ENCODE measurements at regions of chr6 and their contacts with region 1.

Region 1: DNA sequence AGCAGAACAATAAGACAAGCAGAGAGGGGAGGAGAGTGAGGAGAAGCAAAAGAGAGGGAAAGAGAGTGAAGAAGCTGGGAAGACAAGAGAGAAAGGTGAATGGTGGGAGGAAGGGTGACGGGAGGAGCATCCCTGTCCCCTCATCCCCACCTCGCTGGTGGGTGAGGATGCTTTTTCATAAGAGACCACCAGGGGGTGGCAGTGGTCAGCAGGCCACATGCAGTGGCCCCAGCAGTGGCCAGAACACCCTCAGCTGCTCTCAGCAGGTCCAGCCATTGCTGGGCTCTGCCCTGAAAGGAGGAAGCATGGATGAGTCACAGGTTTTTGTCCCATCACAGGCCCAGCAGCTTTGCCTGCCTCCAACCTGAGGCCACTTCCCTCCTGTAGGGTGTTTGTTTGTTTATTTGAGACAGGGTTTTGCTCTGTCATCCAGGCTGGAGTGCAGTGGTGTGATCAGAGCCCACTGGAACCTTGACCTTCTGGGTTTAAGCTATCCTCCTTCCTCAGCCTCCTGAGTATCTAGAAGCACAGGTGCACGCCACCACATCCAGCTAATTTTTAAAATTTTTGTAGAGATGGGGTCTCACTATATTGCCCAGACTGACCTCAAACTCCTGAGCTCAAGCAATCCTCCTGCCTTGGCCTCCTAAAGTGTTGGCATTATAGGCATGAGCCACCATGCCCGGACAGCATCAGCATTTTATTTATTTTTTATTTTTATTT is 24.0 kb downstream of the FGD2 start:
- DNase-seq: peak; percentile 85
- ATAC-seq: peak; percentile 94
- H3K4me3 ChIP-seq: no peak overlapping the region
- H3K27ac ChIP-seq: no peak overlapping the region
- H3K4me1 ChIP-seq: peaks cover 3% of the 10 kb centered on the region
- H3K27me3 ChIP-seq: no peaks in the 10 kb centered on the region
- CTCF ChIP-seq: peak; percentile 74

Region 2: DNA sequence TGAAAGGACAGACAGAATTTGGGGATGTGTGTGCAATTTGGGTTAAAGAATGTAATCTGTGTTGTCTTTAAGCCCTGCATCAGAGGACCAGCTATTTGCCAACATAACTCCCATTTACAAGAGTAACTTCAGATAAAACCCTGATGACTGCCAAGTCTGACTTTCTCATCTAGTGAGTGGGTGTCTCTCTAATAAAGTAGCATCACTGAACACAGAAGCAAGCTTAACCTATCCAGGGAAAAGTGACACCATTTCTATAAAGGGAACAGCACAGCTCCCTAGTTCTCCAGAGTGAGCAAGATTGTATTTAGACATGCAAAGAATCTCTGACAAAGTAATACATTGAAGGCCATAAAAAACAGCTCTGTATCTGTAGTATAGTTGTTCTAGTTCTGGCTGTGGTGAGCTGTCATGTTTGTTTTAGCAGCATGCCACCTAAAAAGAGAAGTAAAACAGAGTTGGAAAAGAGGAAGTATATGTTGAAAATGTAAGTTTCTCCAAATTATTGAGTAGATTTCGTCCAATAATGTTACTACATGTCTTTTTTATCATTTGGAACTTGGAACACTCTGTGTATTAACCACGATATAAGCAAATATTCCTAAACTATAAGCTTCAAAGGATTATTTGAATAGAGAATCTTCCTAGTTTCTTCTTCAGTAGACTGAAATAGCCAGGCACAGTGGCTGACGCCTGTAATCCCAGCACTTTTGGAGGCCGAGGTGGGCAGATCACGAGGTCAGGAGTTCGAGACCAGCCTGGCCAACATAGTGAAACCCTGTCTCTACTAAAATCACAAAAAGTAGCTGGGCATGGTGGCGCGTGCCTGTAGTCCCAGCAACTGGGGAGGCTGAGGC is 131.7 kb after region 1 on chr6:
- intact Hi-C with region 1: no loop called
- DNase-seq: no peak
- ATAC-seq: peak; percentile 55
- H3K4me3 ChIP-seq: no peak overlapping the region
- H3K27ac ChIP-seq: no peak overlapping the region
- H3K4me1 ChIP-seq: peaks cover 5% of the 10 kb centered on the region
- H3K27me3 ChIP-seq: no peaks in the 10 kb centered on the region
- CTCF ChIP-seq: no peak

Region 3: DNA sequence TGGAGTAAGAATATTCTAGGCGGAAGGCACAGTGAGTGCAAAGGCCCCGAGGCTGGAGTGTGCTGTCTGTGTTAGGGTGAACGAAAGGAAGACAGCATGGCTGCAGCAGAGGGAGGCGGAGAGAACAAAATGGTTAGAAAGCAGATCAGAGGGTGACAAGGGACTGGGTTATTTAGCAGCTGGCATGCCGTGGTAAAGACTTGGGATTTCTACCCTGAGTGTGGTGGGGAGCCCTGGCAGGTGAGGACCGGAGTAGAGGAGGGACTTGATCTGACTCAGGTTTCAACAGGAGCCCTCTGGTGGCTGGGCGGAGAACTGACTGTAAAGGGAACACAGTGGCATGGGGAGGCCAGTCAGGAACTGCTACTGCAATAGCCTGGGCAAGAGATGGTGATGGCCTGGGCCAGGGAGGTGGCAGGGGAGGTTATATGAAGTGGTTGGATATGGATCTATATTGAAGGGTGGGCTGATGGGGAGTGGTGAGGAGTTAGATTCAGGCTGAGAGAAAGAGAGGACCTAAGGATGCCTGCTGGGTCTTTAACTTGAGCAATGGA is 178.6 kb after region 1 on chr6:
- intact Hi-C with region 1: loop called (anchors 10 kb)
- DNase-seq: peak; percentile 89
- ATAC-seq: peak; percentile 92
- H3K4me3 ChIP-seq: no peak overlapping the region
- H3K27ac ChIP-seq: no peak overlapping the region
- H3K4me1 ChIP-seq: peaks cover 18% of the 10 kb centered on the region
- H3K27me3 ChIP-seq: no peaks in the 10 kb centered on the region
- CTCF ChIP-seq: peak; percentile 81

Measured in upper lobe of right lung (tissue), 1 donor.